GM12878 (cell line): ENCODE measurements at regions of chr1 and their contacts with region 1.

Region 1: DNA sequence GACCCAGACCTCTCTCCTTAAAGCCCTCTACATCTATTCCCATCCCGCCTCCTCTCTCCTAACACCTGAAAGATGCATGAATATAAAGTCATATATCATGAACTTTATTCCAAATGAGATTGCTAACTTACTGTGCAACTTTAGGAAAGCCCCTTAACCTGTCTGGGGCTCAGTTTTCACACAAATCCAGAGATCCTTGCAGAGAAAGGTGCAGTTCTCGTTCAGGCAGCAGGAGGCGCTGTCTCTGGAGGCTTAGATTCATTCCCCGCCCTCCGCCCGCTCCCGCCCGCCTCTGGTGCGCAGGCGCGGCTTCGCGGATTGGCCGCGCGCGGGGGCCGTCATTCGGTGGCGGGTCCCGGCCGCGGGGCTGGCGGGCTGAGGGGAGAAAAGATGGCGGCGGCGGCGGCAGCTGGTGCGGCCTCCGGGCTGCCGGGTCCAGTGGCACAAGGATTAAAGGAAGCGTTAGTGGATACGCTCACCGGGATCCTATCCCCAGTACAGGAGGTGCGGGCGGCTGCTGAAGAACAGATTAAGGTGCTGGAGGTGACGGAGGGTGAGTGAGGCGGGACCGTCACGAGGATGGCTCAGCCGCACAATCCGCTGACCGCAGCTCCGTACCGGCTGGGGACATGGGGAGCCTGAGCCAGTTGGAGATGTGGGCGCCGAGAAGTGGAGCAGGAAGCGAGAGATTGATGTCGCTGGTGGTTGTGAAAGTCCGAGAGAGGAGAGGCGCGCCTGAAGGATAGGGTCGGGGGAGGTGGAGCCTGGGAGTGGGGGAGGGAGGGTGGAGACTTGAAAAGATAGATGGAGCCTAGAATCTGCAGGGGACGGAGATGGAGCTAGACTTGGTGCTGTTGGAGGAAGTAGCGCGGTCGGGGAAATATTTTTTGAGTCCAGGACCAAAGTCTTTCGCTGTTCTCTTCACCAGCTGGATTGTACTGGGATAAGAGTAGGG is at the start of gene IPO9:
- DNase-seq: peak; percentile 76
- ATAC-seq: peak; percentile 93
- H3K4me3 ChIP-seq: peak within 1 kb of the TSS; percentile 99
- H3K27ac ChIP-seq: peak within 1 kb of the TSS; percentile 97
- H3K4me1 ChIP-seq: peaks cover 2% of the 10 kb centered on the region; the same call in 1 of the 2 replicates
- H3K27me3 ChIP-seq: no peaks in the 10 kb centered on the region
- CTCF ChIP-seq: peak; percentile 94 to 98 (median 95)
- EP300 ChIP-seq: no peak
- POLR2A ChIP-seq: peak; percentile 93
- RAD21 ChIP-seq: no peak
- polyA plus RNA-seq, gene IPO9: 19.1 to 32.9 TPM

Region 2: GRCh38 chr1:201842472-201843027 is 13.5 kb after region 1 on chr1:
- CTCF ChIA-PET with region 1: interaction called, 16 read pairs
- POLR2A ChIA-PET with region 1: interaction called, 4 read pairs
- RAD21 ChIA-PET with region 1: no interaction called
- SMC1A ChIA-PET with region 1: interaction called, 9 read pairs
- in situ Hi-C with region 1: no loop called
- intact Hi-C with region 1: no loop called
- DNase-seq: no peak
- ATAC-seq: peak; percentile 58
- H3K4me3 ChIP-seq: no peak overlapping the region
- H3K27ac ChIP-seq: no peak overlapping the region
- H3K4me1 ChIP-seq: no peaks in the 10 kb centered on the region
- H3K27me3 ChIP-seq: no peaks in the 10 kb centered on the region
- CTCF ChIP-seq: no peak
- EP300 ChIP-seq: no peak
- POLR2A ChIP-seq: no peak
- RAD21 ChIP-seq: no peak

Region 3: GRCh38 chr1:201850053-201850397 is 20.9 kb after region 1 on chr1:
- CTCF ChIA-PET with region 1: interaction called, 11 read pairs
- POLR2A ChIA-PET with region 1: no interaction called
- RAD21 ChIA-PET with region 1: no interaction called
- SMC1A ChIA-PET with region 1: interaction called, 9 read pairs
- in situ Hi-C with region 1: no loop called
- intact Hi-C with region 1: no loop called
- DNase-seq: no peak
- ATAC-seq: no peak
- H3K4me3 ChIP-seq: no peak overlapping the region
- H3K27ac ChIP-seq: no peak overlapping the region
- H3K4me1 ChIP-seq: no peaks in the 10 kb centered on the region
- H3K27me3 ChIP-seq: no peaks in the 10 kb centered on the region
- CTCF ChIP-seq: no peak
- EP300 ChIP-seq: no peak
- POLR2A ChIP-seq: no peak
- RAD21 ChIP-seq: no peak